Cardiac septum (tissue), 1 donor: ENCODE measurements at regions of chr5 and their contacts with region 1.

Region 1: GRCh38 chr5:43040287-43041098 is at the start of gene ANXA2R:
- DNase-seq: peak; percentile 94
- total RNA-seq, gene ANXA2R: 1.2 TPM

Region 2: GRCh38 chr5:42908509-42909488 is 131.7 kb before region 1 on chr5:
- intact Hi-C with region 1: loop called (anchors 5 kb)
- DNase-seq: peak; percentile 95

Region 3: GRCh38 chr5:42950440-42951292 is 89.8 kb before region 1 on chr5:
- intact Hi-C with region 1: loop called (anchors 2 kb)
- DNase-seq: peak; percentile 88

Region 4: DNA sequence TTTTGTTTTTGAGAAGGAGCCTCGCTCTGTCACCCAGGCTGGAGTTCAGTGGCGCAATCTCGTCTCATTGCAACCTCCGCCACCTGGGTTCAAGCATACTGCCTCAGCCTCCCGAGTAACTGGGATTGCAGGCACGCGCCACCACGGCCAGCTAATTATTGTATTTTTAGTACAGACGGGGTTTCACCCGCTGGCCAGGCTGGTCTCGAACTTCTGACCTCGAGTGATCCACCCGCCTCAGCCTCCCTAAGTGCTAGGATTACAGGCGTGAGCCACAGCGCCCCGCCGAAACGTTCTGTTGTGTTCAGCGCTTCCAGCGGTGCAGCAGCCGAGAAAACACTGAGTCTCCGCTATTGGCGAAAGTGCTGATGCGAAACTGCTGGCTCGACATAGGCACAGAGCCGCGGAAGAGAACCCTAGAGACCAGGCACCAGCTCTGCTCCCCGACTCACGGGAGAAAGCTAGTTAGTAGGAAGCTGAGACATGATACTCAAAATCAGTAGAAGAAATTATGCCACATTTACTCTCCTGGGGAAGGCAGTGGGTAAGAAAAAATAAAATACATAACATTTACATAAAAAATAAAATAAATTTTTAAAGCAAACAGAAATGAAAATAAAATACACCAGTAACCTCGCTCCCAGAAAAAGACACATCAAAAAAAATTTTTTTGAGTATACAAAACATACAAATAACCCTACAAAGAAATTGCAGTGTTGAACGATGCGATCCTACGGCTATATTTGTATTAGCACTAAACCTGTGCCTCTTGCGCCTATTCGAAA is 31.9 kb before region 1 on chr5:
- intact Hi-C with region 1: loop called (anchors 5 kb)
- DNase-seq: peak; percentile 91

Region 5: DNA sequence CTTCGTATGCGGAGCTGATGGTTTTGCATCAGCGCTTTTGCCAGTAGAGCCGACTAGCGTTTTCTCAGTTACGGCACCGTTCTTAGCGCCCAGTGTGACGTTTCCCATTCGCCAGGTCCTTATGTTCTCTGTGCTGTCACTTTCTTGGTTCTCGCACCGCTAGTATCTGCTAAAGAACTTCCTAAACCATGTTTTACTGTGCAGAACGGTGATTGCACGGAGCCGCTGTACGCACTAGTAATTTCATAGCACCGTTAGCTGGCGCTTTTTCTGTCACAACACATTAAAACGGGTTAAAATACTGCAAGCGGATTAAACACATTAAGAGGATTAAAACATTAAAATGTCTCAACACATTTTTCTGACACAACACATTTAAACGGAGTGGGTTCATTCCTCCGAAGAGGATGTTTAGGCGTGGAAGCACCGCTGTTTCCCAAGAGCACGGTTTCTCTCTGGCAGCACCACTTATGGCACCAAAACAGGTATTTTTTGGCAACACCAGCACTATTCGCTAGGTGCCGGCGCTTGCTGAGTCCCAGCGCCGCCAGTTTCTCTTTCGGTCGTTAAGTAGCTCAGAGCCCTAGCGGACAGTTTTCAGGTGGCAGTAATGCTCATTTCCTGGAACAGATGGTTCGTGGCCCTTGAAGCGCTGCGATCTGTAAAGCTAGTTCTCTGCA is 20.7 kb before region 1 on chr5:
- intact Hi-C with region 1: loop called (anchors 1 kb)
- DNase-seq: no peak

Region 6: DNA sequence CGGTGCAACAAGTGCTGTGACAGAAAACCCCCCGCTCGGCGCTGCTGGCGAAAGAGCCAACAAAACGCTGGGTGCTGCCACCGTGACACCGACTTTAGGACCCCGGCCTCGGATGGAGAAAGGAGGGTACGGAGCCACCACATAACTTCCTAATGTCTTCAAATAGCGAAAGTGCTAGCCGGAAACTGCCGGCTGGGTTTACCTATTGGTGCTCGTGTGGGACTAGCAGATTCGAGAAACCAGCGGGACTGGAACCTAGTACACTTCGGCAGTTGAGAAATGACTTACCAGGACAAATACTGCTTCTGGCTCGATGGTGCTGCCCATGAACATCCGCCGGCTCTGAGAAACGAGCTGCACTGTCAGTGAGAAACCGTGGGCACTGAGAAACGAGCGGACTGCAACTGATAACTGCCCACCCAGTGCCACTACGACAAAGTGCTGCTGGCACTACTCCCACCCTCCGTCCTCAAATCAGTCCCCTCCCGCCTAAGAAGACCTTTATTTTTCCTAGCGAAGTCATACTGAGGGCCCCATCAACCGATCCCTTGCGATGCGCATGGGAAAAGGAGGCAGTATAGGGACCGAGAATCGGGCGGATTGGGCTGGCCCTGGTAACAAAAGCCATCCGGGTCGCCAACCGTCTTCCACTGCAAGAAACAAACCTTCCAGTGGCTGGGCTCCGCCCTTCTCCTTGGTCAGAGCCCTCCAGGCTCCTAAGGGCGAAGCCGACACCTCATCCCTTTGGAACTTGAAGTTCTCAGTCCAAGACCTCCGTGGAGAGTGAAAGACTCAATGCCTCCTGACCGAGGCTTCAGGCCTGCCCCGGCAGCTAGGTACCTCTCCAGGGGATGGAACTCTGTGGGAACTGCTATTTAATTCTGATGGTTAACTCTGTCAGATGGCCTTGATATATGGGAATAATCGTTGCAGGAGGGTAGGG is 26.6 kb after region 1 on chr5:
- intact Hi-C with region 1: loop called (anchors 1 kb)
- DNase-seq: peak; percentile 95

Region 7: GRCh38 chr5:43171914-43172313 is 131.4 kb after region 1 on chr5:
- intact Hi-C with region 1: no loop called
- DNase-seq: no peak